ENCODE measurements at regions of chr6 and their contacts with region 1.

Region 1: GRCh38 chr6:16058216-16059075 is 70.4 kb upstream of the MYLIP start:
- DNase-seq: peak in 1 of 2 donors; percentile 2
- ATAC-seq: peak in 1 of 2 donors; percentile 28
- H3K4me3 ChIP-seq: no peak overlapping the region
- H3K27ac ChIP-seq: peak overlapping the region in 3 of 4 donors; percentile 50 to 57 (median 54)
- H3K4me1 ChIP-seq: peaks cover 14 to 24% of the 10 kb centered on the region in 2 donors
- H3K27me3 ChIP-seq: no peaks in the 10 kb centered on the region
- CTCF ChIP-seq: no peak
- POLR2A ChIP-seq: no peak

Region 2: GRCh38 chr6:15955944-15956735 is 102.3 kb before region 1 on chr6:
- in situ Hi-C with region 1: no loop called
- intact Hi-C with region 1: loop called (anchors 10 kb)
- DNase-seq: no peak
- ATAC-seq: no peak
- H3K4me3 ChIP-seq: no peak overlapping the region
- H3K27ac ChIP-seq: no peak overlapping the region
- H3K4me1 ChIP-seq: peaks cover 3 to 14% of the 10 kb centered on the region in 2 donors
- H3K27me3 ChIP-seq: no peaks in the 10 kb centered on the region
- CTCF ChIP-seq: no peak
- POLR2A ChIP-seq: no peak

Region 3: DNA sequence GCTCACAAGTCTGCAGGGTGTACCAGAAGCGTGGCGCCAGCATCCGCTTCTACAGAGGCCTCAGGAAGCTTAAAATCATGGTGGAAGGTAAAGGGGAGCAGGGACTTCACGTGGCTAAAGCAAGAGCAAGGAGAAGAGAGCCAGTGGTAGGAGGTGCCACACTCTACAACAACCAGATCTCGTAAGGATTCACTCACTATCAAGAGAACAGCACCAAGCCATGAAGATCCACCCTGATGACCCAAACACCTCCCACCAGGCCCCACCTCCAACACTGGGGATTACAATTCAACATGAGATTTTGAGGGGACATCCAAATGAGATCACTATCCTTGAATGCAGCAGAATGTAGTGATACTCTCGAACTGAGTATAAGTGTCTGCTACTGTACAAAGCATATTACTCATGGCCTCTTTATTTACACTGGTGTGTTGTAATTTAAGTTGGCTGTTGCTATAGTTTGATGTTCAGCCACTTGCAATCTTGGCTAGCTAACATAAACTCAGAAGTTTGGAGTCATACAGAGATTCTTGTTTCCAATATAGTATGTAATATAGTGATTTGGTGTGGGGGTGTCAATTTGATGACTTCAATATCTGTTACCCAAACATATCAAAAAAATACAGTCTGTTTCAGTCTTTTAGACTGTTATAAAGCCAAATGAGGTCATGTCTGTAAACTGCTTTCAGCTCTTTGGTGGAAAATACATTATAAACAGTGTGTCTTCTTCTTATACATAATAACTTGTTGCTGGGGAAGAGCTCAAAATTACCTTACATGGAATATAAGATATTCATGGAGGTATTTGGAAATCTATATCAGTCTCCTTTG is 31.0 kb after region 1 on chr6:
- in situ Hi-C with region 1: no loop called
- intact Hi-C with region 1: no loop called
- DNase-seq: no peak
- ATAC-seq: peak; percentile 98
- H3K4me3 ChIP-seq: no peak overlapping the region
- H3K27ac ChIP-seq: peak overlapping the region; percentile 58 to 77 (median 64)
- H3K4me1 ChIP-seq: peaks cover 11 to 19% of the 10 kb centered on the region in 2 donors
- H3K27me3 ChIP-seq: no peaks in the 10 kb centered on the region
- CTCF ChIP-seq: no peak
- POLR2A ChIP-seq: no peak